ENCODE measurements at regions of chr13 and their contacts with region 1.

Region 1: DNA sequence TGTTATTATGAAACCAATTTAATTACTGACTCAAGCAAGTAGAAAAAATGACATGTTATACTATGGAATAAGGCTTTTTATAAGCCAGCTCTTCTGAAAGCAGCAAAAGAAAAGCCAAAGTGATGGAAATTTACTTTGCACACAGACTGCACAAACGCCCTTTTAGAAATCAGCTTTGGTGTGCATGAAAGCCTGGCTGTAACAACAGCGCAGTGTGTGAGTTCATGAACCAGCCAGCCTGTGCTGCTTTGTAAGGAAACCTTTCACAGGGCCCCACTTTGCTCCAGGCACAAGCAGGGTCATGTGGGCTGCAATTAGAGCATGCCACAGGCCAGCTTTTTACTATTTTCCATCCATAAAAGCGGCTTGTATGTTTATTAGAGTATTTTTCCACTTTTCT is 13.6 kb upstream of the IFT88 start:
- DNase-seq: no peak
- H3K4me3 ChIP-seq: no peak overlapping the region
- H3K27ac ChIP-seq: no peak overlapping the region
- H3K4me1 ChIP-seq: no peaks in the 10 kb centered on the region
- H3K27me3 ChIP-seq: no peaks in the 10 kb centered on the region
- CTCF ChIP-seq: no peak

Region 2: DNA sequence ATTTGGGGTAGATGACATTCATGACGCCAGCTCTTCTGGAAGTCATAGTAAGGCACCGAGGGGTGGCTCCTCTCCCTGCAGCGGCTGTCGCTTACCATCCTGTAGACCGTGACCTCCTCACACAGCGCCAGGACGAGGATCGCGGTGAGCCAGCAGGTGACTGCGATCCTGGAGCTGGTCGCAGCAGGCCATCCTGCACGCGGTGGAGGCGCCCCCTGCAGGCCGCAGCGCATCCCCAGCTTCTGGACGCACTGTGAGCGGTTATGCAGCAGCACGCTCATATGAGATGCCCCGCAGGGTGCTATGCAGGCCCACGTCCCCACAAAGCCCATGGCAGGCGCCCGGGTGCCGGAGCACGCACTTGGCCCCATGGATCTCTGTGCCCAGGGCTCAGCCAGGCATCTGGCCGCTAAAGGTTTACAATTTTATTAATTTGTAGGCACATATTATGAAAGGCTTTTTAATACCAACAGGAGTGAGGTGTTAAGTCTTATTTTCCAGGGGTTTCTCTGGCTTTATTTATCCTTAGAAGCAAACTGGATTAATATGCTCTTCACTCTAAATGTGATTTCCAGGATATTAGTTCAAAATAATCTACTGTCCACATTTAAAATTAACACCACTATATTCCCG is 735.0 kb before region 1 on chr13:
- CTCF ChIA-PET with region 1: no interaction called
- dilution Hi-C with region 1: no loop called
- in situ Hi-C with region 1: no loop called
- intact Hi-C with region 1: no loop called
- DNase-seq: no peak
- H3K4me3 ChIP-seq: no peak overlapping the region
- H3K27ac ChIP-seq: no peak overlapping the region
- H3K4me1 ChIP-seq: no peaks in the 10 kb centered on the region
- H3K27me3 ChIP-seq: no peaks in the 10 kb centered on the region
- CTCF ChIP-seq: peak; percentile 50 to 60

Region 3: DNA sequence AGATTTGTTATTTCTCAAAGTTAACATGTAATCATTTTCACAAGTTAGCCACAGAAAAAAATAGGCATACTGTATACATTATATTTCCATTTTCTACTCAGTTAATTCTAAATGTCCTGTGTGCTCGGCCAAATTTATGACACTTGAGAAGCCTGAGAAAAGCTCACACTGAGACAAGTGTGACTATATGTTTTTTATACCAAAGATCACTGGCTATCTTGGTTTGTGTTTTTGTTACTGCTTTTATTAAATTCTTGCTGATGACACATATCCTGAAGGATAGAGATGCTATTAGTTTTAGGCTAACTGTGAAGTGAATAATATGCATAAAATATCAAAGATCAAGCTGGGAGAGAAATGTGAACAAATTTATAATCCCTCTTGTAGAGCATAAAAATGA is 100.8 kb after region 1 on chr13:
- CTCF ChIA-PET with region 1: interaction called, 11 read pairs
- dilution Hi-C with region 1: no loop called
- in situ Hi-C with region 1: no loop called
- intact Hi-C with region 1: no loop called
- DNase-seq: no peak
- H3K4me3 ChIP-seq: no peak overlapping the region
- H3K27ac ChIP-seq: no peak overlapping the region
- H3K4me1 ChIP-seq: no peaks in the 10 kb centered on the region
- H3K27me3 ChIP-seq: no peaks in the 10 kb centered on the region
- CTCF ChIP-seq: no peak